Activated B cell treated with CpG ODN at 0.5 μM for 24 hours (primary cell): ENCODE measurements at regions of chr16 and their contacts with region 1.

Region 1: GRCh38 chr16:57422026-57422944 is 17.7 kb downstream of the CCL17 start:
- DNase-seq: no peak
- ATAC-seq: peak; percentile 29
- H3K4me3 Mint-ChIP-seq: no peak overlapping the region
- H3K27ac Mint-ChIP-seq: no peak overlapping the region
- H3K4me1 Mint-ChIP-seq: peaks cover 14% of the 10 kb centered on the region
- H3K27me3 Mint-ChIP-seq: no peaks in the 10 kb centered on the region
- CTCF ChIP-seq: no peak

Region 2: DNA sequence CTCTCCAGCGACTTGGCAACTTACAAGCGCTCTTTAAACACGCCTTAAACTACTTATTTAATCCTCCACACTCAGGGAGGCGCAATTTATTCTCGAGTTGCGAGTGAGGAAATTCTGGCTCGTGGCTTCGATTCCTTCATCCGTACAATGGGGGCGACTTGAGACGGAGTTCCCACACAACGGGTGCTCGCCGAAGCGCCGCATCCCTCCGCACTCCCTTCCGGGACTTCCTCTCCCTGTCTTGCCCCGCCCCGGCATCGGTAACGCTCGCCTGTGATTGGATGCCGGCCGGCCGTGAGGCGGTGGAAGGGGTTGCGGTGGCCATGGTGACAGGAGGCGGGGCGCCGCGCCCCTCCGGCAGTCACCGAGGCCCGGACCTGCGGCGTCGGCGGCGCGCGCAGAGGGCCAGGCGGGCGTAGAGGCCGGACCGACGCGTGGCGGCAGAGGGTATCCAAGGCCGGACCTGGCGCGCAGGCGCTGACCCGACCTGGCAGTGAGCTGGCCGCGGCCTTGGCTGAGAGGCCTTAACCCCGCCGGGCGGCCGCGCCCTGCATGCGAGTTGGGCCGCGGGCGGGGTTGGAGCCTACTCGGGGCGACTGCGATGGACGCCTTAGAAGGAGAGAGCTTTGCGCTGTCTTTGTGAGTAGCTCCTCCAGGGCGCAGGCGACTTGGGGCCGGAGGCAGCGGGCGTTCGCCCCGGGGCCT is 177.4 kb before region 1 on chr16 and contains the start of gene ARL2BP:
- CTCF ChIA-PET with region 1: no interaction called
- POLR2A ChIA-PET with region 1: interaction called, 8 read pairs
- intact Hi-C with region 1: loop called (anchors 2 kb)
- DNase-seq: peak; percentile 95
- ATAC-seq: peak; percentile 95
- H3K4me3 Mint-ChIP-seq: peak within 1 kb of the TSS; percentile 94
- H3K27ac Mint-ChIP-seq: peak within 1 kb of the TSS; percentile 91
- H3K4me1 Mint-ChIP-seq: peaks cover 40% of the 10 kb centered on the region
- H3K27me3 Mint-ChIP-seq: no peaks in the 10 kb centered on the region
- CTCF ChIP-seq: no peak
- total RNA-seq, gene ARL2BP: 27.1 and 29.4 TPM in 2 replicates

Region 3: DNA sequence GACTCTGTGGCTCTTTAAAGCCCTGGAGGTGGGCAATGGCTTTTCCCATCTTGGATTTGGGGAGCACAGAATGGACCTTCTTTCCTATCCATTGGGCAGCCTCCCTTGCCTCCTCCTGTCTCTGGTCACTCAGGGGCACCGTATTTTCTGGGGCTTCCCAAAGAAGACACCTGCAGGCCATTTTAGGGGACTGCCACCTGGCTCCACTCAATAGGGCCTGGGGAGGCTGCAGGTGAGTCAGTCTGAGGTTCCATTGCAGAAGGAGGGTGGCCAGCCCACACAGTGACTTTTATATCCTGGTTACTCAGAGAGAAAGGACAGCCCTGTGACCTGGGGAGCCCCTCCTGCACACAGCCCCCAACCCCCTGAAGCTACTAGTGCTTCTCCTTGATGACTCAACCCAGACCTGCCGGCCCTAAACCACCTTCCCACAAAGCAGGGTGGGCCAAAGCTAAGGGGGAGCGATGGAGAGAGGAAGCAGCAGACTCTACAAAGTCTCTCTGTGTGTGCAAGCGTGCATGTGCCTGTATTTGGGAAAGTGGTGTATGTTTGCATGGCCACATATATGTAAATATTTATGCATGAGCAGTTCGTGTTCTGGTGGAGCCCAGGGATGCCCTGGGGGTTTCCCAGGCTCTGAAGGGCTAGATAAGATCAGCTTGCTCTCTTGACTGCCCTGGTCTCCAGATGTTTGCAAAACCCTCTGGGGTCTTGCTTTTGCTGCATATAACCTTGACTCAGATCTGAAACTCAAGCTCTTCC is 45.0 kb before region 1 on chr16:
- CTCF ChIA-PET with region 1: interaction called, 14 read pairs
- POLR2A ChIA-PET with region 1: interaction called, 18 read pairs
- intact Hi-C with region 1: loop called (anchors 1 kb)
- DNase-seq: peak; percentile 46
- ATAC-seq: peak; percentile 82
- H3K4me3 Mint-ChIP-seq: peak overlapping the region; percentile 29
- H3K27ac Mint-ChIP-seq: peak overlapping the region; percentile 86
- H3K4me1 Mint-ChIP-seq: peaks cover 43% of the 10 kb centered on the region
- H3K27me3 Mint-ChIP-seq: no peaks in the 10 kb centered on the region
- CTCF ChIP-seq: no peak

Region 4: DNA sequence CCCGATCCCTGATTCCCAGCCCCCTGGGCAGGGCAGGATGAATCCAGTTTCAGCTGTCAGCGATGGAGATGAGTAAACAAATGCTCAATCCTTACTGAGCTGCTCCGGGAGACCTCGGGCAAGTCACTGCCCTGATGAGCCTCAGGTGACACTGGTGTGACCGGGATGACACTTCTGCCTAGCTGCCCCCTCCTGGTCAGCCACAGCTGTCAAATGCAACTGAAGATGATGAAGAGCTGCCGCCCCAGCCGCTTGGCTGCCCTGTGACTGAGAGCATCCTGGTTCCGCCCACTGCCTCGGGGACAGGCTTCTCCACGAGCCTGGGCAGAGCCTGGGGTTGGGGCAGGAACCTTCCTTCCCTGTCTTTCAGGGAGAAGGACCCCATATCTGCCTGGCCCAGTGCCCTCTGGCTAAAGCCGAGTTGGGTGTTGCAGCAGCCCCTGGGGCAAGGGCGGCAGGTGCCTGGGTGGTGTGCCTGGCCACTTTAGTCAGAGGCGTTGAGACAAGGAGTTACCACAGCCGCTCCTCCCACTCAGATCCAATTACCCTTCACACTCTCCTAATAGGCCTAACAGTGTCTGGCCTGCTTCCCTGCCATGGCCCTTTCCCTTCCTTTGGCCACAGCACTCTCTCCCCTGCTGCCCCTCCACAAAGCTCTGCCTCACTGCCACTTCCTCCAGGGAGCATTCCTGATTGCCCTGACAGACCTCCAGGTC is 12.3 kb before region 1 on chr16:
- CTCF ChIA-PET with region 1: no interaction called
- POLR2A ChIA-PET with region 1: no interaction called
- intact Hi-C with region 1: no loop called
- DNase-seq: no peak
- ATAC-seq: no peak
- H3K4me3 Mint-ChIP-seq: no peak overlapping the region
- H3K27ac Mint-ChIP-seq: no peak overlapping the region
- H3K4me1 Mint-ChIP-seq: peaks cover 50% of the 10 kb centered on the region
- H3K27me3 Mint-ChIP-seq: no peaks in the 10 kb centered on the region
- CTCF ChIP-seq: no peak

Region 5: DNA sequence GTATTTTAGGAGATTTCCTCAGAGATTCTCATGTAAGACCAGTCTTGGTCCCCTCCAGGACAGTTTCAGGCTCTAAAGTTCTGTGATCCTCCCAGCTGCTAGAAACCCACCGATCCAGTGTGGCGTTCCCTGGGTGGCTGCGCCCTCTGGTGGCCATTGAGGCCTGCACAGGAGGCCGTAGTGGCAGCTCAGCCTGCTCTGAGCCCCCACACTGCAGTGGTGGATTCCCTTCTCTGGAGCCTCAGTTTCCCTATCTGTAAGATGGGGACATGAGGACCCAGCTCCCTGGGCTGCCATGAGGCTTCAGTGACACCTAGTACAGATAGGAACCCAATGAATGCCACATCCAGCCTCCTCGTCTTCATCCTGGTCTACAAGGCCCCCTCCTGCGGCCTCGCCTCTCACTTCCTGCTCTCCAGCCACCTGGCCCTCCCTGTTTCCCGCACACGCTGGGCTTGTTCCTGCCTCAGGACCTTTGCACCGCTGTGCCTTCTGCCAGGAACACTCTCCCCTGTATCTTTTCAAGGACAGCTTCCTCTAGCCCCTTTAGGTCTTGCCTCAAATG is 97.6 kb after region 1 on chr16:
- CTCF ChIA-PET with region 1: interaction called, 51 read pairs
- POLR2A ChIA-PET with region 1: interaction called, 16 read pairs
- intact Hi-C with region 1: loop called (anchors 1 kb)
- DNase-seq: peak; percentile 68
- ATAC-seq: peak; percentile 80
- H3K4me3 Mint-ChIP-seq: no peak overlapping the region
- H3K27ac Mint-ChIP-seq: no peak overlapping the region
- H3K4me1 Mint-ChIP-seq: peaks cover 40% of the 10 kb centered on the region
- H3K27me3 Mint-ChIP-seq: no peaks in the 10 kb centered on the region
- CTCF ChIP-seq: peak; percentile 96

Region 6: GRCh38 chr16:57648590-57649442 is 226.5 kb after region 1 on chr16:
- CTCF ChIA-PET with region 1: no interaction called
- POLR2A ChIA-PET with region 1: no interaction called
- intact Hi-C with region 1: loop called (anchors 1 kb)
- DNase-seq: peak; percentile 67
- ATAC-seq: peak; percentile 87
- H3K4me3 Mint-ChIP-seq: no peak overlapping the region
- H3K27ac Mint-ChIP-seq: no peak overlapping the region
- H3K4me1 Mint-ChIP-seq: peaks cover 25% of the 10 kb centered on the region
- H3K27me3 Mint-ChIP-seq: peaks cover 2% of the 10 kb centered on the region
- CTCF ChIP-seq: peak; percentile 85

Region 7: GRCh38 chr16:57899771-57900661 is 477.7 kb after region 1 on chr16:
- CTCF ChIA-PET with region 1: no interaction called
- POLR2A ChIA-PET with region 1: interaction called, 10 read pairs
- intact Hi-C with region 1: no loop called
- DNase-seq: peak; percentile 48
- ATAC-seq: peak; percentile 68
- H3K4me3 Mint-ChIP-seq: no peak overlapping the region
- H3K27ac Mint-ChIP-seq: no peak overlapping the region
- H3K4me1 Mint-ChIP-seq: no peaks in the 10 kb centered on the region
- H3K27me3 Mint-ChIP-seq: peaks cover 23% of the 10 kb centered on the region
- CTCF ChIP-seq: no peak

Region 8: GRCh38 chr16:58000706-58001676 is 578.7 kb after region 1 on chr16 and contains the start of gene USB1:
- CTCF ChIA-PET with region 1: interaction called, 4 read pairs
- POLR2A ChIA-PET with region 1: no interaction called
- intact Hi-C with region 1: loop called (anchors 1 kb)
- DNase-seq: peak; percentile 97
- ATAC-seq: peak; percentile 84
- H3K4me3 Mint-ChIP-seq: peak within 1 kb of the TSS; percentile 94
- H3K27ac Mint-ChIP-seq: peak within 1 kb of the TSS; percentile 92
- H3K4me1 Mint-ChIP-seq: peaks cover 42% of the 10 kb centered on the region
- H3K27me3 Mint-ChIP-seq: no peaks in the 10 kb centered on the region
- CTCF ChIP-seq: no peak
- total RNA-seq, gene USB1: 37.4 and 40.7 TPM in 2 replicates